ENCODE measurements at regions of chr3 and their contacts with region 1.

Region 1: DNA sequence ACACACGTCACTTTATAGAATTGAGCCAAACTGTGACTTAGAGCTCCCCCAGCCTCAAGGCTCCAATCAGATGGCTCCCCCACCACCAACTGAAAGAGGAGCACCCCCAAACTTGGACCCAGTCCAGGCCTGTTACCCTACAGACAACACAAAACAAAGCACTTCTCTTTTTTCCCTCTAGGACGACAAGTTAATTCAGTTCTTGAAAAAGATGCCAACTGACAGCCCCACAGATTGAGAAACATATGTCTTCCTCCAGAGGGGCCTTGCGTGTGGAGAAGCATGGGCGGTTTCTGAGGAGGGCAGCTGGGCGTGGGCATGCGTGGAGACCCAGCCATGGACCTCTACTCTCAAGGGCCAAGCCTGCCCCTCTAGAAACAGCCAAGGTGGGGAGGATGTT is 229.5 kb downstream of the SHQ1 start:
- DNase-seq: no peak
- H3K4me3 ChIP-seq: no peak overlapping the region
- CTCF ChIP-seq: no peak
- POLR2A ChIP-seq: no peak

Region 2: DNA sequence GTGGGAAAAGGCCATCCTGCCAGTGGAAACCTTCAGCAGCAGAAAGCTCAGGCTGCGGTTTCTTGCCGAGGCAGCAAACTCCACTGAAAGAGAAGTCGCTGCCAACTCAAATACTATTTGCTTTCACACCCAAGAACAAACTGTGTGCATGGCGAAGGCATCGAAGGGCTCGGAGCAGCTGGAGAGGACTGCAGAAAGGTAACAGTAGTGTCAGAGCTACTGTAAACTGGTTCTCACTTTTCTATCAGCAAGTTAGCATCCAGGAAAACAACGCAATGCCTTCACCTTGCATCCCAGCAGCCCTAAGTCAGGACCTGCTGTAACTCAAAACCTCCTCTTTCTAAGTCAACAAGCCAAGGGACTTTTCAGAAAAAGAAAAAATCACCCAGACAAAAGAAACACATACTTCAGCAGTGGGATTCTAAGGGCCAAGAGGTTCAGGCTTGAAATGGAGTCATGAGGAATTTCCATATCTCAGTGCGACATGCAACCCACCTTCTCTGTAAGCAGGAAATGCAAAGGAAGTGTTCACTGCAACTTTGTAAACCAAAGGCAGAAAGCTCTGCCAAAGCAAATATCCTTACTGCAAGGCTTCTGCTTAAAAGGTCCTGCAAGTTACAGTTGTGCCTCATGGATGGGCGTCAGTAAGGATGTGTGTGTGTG is 1228.7 kb before region 1 on chr3:
- intact Hi-C with region 1: no loop called
- DNase-seq: no peak
- H3K4me3 ChIP-seq: no peak overlapping the region
- CTCF ChIP-seq: no peak
- POLR2A ChIP-seq: no peak

Region 3: DNA sequence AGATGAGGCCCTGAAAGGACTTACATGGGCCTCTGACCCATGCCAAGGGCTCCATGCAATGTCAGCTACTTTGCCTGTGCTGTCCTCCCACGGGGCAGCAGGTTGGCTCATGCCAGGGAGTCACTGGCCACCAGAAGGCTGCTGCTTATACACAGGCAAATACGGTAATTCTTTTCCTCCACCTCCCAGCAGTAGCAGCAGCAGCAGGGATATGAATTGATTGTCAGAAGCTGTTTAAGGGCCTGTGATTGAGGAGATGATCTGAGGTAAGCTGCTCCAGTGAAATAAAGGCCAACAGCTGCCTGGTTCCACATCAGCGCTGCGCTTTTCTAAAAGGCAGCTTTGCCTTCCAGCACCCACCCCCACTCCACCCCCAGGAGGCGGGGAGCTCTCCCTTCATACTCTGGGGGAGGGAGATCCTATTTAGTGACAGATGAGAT is 21.0 kb before region 1 on chr3:
- intact Hi-C with region 1: loop called (anchors 1 kb)
- DNase-seq: no peak
- H3K4me3 ChIP-seq: no peak overlapping the region
- CTCF ChIP-seq: no peak
- POLR2A ChIP-seq: no peak

Measured in lower leg skin (tissue), 4 donors.